Activated T-helper 1 cell treated with anti-CD3 and anti-CD28 coated beads, Interleukin-12 subunit alpha, Interleukin-12 subunit beta, Interleukin-2, Interleukin-4 antibody, amounts not matched to agents 30 ng/mL and 10 ng/mL and 1 ng/mL, durations not matched to agents 14 hours and 24 hours and 36 hours (primary cell): ENCODE measurements at regions of chr3 and their contacts with region 1.

Region 1: GRCh38 chr3:30606301-30607031 is at the start of gene TGFBR2:
- DNase-seq: peak; percentile 81
- H3K4me3 Mint-ChIP-seq: peak within 1 kb of the TSS; percentile 97
- H3K27ac Mint-ChIP-seq: peak within 1 kb of the TSS; percentile 98
- H3K4me1 Mint-ChIP-seq: peaks cover 72% of the 10 kb centered on the region
- H3K27me3 Mint-ChIP-seq: no peaks in the 10 kb centered on the region
- total RNA-seq, gene TGFBR2: 58.2 and 59.6 TPM in 2 replicates

Region 2: DNA sequence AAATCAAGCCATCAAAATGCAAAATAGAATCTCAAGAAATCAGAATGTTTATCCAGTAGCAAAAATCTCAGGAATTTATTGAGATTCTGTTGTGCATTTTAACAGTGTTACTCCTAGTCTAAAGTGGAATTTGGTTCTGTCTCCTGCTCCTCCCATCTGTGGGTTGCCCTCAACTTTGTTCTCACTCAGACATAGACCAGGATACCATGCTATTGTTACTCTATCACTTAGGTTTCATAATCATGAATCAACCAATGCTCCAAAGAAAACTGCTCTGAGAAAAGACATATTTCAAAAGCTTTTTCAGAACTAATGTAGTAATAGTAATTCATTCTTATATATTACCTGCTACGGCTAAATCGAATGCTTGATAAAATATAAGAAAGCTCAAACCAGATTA is 1050.9 kb before region 1 on chr3:
- intact Hi-C with region 1: no loop called
- DNase-seq: no peak
- H3K4me3 Mint-ChIP-seq: no peak overlapping the region
- H3K27ac Mint-ChIP-seq: no peak overlapping the region
- H3K4me1 Mint-ChIP-seq: peaks cover 7% of the 10 kb centered on the region
- H3K27me3 Mint-ChIP-seq: no peaks in the 10 kb centered on the region

Region 3: GRCh38 chr3:30042274-30042859 is 564.1 kb before region 1 on chr3:
- intact Hi-C with region 1: loop called (anchors 2 kb)
- DNase-seq: peak; percentile 20
- H3K4me3 Mint-ChIP-seq: no peak overlapping the region
- H3K27ac Mint-ChIP-seq: no peak overlapping the region
- H3K4me1 Mint-ChIP-seq: no peaks in the 10 kb centered on the region
- H3K27me3 Mint-ChIP-seq: peaks cover 13% of the 10 kb centered on the region

Region 4: GRCh38 chr3:30221619-30222018 is 384.8 kb before region 1 on chr3:
- intact Hi-C with region 1: loop called (anchors 5 kb)
- DNase-seq: no peak
- H3K4me3 Mint-ChIP-seq: no peak overlapping the region
- H3K27ac Mint-ChIP-seq: no peak overlapping the region
- H3K4me1 Mint-ChIP-seq: peaks cover 34% of the 10 kb centered on the region
- H3K27me3 Mint-ChIP-seq: peaks cover 3% of the 10 kb centered on the region

Region 5: DNA sequence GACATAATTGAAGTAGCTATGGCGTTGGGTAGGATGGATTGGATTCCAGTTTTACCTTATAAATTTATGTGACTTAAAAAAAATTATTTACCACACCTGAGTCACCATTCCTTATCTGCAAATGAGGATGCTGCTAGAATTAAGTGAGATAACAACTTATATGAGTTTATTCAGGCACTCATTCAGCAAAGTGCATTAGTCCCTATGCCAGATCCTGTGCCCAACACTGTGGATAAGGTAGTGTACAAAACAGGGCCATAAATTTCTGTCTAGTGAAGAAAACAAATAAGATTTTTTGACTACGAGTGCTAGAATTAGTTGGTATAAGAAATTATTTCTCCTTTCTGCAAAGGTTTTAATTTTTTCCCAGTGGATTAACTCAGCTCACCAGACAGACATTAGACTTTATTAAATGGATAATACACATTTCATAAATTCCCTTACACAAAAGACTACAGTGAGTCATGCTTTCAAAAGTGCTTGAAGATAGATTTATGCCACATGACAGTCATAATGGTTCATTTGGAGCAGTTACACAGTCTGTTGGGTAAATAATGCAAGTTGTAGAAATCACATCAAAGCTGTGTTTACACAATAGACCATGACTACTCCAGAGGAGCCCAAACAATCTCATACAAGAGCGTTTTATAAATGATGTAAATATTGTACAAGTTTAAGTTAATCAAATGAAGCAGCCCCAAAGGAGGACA is 129.9 kb before region 1 on chr3:
- intact Hi-C with region 1: loop called (anchors 10 kb)
- DNase-seq: no peak
- H3K4me3 Mint-ChIP-seq: no peak overlapping the region
- H3K27ac Mint-ChIP-seq: no peak overlapping the region
- H3K4me1 Mint-ChIP-seq: peaks cover 51% of the 10 kb centered on the region
- H3K27me3 Mint-ChIP-seq: no peaks in the 10 kb centered on the region

Region 6: DNA sequence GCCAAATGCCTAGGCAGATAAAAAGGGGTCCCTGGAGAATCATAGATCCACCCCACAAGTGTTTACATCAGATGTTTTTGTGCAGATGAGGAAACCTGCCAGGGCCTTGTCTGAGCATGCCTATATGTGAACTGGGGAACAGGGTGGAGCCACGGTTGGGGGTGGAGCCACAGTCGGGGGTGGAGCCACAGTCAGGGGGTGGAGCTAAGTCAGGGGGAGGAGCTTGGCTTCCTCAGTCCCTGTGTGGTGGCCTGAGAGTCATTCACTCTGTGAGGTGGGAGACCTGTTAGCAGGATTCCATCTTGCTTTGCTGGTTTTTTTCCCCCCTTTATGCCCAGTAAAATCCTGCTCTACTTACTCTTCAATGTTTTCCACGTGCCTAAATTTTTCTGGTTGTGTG is 57.9 kb before region 1 on chr3:
- intact Hi-C with region 1: loop called (anchors 5 kb)
- DNase-seq: peak; percentile 15
- H3K4me3 Mint-ChIP-seq: no peak overlapping the region
- H3K27ac Mint-ChIP-seq: no peak overlapping the region
- H3K4me1 Mint-ChIP-seq: peaks cover 28% of the 10 kb centered on the region
- H3K27me3 Mint-ChIP-seq: peaks cover 3% of the 10 kb centered on the region

Region 7: GRCh38 chr3:30644593-30645012 is 38.1 kb after region 1 on chr3:
- intact Hi-C with region 1: loop called (anchors 1 kb)
- DNase-seq: peak; percentile 66
- H3K4me3 Mint-ChIP-seq: peak overlapping the region; percentile 57
- H3K27ac Mint-ChIP-seq: peak overlapping the region; percentile 94
- H3K4me1 Mint-ChIP-seq: peaks cover 93% of the 10 kb centered on the region
- H3K27me3 Mint-ChIP-seq: no peaks in the 10 kb centered on the region

Region 8: DNA sequence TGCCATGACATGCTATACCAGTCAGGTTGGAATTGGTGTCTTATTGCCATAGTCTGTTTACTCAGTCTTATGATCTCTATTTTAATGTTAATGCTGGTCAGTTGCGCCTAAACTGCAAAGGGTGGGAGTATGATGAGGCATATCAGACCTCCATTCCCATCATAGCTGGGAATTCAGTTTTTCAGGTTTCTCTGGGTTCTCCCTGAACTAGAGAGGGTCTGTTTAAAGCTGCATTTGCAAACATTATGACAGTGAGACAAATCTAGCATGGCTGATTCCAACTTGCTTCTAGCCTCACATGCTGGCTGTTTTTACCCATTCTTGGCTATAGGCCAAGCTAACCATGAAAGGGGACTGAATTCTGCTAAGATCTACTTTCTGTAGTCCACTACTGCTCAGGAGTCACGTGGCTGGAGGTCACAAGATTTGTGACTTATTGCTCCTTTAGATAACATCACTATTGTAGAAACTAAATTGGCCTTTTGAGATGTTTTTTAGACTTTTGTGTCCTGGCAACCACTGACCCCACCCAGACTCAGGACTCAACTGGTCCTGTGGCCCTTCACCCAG is 96.4 kb after region 1 on chr3:
- intact Hi-C with region 1: no loop called
- DNase-seq: no peak
- H3K4me3 Mint-ChIP-seq: no peak overlapping the region
- H3K27ac Mint-ChIP-seq: no peak overlapping the region
- H3K4me1 Mint-ChIP-seq: peaks cover 7% of the 10 kb centered on the region
- H3K27me3 Mint-ChIP-seq: no peaks in the 10 kb centered on the region

Region 9: GRCh38 chr3:30751610-30752299 is 145.3 kb after region 1 on chr3:
- intact Hi-C with region 1: loop called (anchors 5 kb)
- DNase-seq: peak; percentile 26
- H3K4me3 Mint-ChIP-seq: no peak overlapping the region
- H3K27ac Mint-ChIP-seq: no peak overlapping the region
- H3K4me1 Mint-ChIP-seq: peaks cover 35% of the 10 kb centered on the region
- H3K27me3 Mint-ChIP-seq: no peaks in the 10 kb centered on the region